Sciatic nerve (tissue), 2 donors: ENCODE measurements at regions of chr2 and their contacts with region 1.

Region 1: DNA sequence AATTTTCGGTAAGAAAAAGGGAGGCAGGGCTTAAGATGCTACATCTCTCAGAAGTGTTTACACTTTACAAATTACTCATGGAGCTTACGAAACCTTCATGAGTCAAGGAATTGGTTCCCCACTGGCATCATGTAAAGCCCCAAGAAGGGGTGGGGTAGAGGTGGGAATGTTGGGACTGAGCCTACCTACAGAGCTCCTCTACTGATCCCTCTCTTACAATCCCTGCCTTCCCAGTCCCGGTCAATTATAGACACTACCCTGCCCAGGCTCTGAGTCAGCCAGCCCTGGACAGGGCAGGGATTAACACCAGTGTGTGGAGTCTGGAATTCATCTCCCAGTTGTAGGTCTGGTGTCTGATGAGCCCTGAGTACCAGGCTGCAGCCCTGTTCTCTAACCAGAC is 248.9 kb downstream of the PAX3 start:
- DNase-seq: no peak
- ATAC-seq: no peak

Region 2: GRCh38 chr2:222686086-222686750 is 636.3 kb after region 1 on chr2:
- intact Hi-C with region 1: no loop called
- DNase-seq: no peak
- ATAC-seq: no peak

Region 3: DNA sequence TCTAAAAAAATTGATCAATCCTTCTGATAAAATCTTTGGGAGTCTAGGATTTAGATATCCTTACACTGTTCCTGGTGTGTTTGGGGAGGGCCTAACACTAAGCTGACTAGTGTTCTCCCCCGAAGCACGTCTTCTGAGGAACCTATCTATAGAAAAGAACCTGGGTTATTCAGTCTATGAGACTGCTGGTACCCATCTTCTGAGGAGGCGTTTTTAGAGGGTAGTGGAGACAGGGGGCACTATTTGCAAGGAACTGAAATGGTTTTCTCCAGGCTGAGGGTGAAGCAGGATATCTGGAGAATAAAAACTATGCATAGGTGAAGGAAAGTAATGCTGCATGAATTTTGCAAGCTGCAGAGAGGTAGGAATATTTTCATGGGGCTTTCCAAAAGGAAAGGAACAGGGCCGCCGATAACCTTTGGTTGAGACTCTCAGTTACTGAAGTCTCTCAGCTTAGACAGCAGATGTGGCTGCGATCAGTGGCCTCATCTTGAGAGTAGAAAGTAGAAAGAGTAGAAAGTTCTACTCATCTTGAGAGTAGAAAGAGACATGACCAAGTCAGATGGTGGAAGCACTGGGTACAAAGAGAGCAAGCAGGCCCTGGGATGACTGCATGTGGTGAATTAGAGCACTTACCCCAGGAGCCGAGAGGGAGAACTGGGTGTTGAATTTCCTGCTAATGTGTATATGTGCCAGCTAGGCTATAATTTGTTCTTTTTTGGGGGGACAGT is 970.2 kb after region 1 on chr2:
- intact Hi-C with region 1: loop called (anchors 5 kb)
- DNase-seq: no peak
- ATAC-seq: no peak